Activated CD4-positive, alpha-beta T cell treated with anti-CD3 and anti-CD28 coated beads for 36 hours (primary cell): ENCODE measurements at regions of chr14 and their contacts with region 1.

Region 1: GRCh38 chr14:92748259-92749016 is at the start of gene LGMN:
- DNase-seq: peak; percentile 90
- ATAC-seq: peak; percentile 97
- H3K4me3 Mint-ChIP-seq: peak within 1 kb of the TSS; percentile 75
- H3K27ac Mint-ChIP-seq: peak within 1 kb of the TSS; percentile 45
- H3K4me1 Mint-ChIP-seq: peaks cover 29% of the 10 kb centered on the region
- H3K27me3 Mint-ChIP-seq: peaks cover 23% of the 10 kb centered on the region
- total RNA-seq, gene LGMN: 3.2 to 5.6 TPM

Region 2: GRCh38 chr14:92728759-92729370 is 19.6 kb before region 1 on chr14:
- CTCF ChIA-PET with region 1: interaction called, 3 read pairs
- POLR2A ChIA-PET with region 1: no interaction called
- intact Hi-C with region 1: loop called (anchors 1 to 2 kb)
- DNase-seq: peak; percentile 84
- ATAC-seq: peak; percentile 97
- H3K4me3 Mint-ChIP-seq: no peak overlapping the region
- H3K27ac Mint-ChIP-seq: no peak overlapping the region
- H3K4me1 Mint-ChIP-seq: peaks cover 20% of the 10 kb centered on the region
- H3K27me3 Mint-ChIP-seq: peaks cover 5% of the 10 kb centered on the region

Region 3: DNA sequence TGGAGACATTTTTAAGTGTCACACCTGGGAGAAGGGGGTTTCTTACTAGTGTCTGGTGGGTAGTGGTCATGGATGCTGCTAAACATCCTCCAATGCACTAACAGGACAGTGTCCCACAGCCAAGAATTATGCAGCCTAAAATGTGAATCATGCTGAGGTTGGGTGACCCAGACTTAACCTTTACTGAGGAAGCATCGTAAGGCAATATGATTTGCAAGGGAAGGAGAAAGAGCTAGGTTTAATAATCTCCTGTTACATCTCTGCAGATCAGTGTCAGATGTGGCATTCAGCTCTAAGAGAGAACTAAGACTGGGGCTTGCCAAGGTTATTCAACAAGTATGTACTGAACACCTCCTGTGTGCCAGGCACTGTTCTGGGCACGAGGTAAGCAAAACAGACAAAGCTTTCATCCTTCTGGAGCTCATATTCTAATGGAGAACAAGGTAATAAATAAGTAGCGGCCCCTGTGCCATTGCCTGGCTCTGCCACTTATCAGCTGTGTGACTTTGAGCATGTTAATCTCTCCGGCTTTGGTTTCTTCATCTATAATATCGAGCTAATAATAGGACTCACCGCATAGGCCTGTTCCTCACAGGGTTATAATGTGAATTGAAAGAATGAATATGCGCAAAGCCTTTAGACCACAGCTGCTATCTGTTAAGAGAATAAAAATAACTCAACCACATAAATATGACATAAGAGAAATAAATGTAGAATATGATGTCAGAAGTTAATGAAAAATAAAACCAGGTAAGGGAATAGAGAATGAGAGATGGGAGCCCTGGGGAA is 32.2 kb after region 1 on chr14:
- CTCF ChIA-PET with region 1: no interaction called
- POLR2A ChIA-PET with region 1: no interaction called
- intact Hi-C with region 1: no loop called
- DNase-seq: no peak
- ATAC-seq: peak; percentile 58
- H3K4me3 Mint-ChIP-seq: no peak overlapping the region
- H3K27ac Mint-ChIP-seq: no peak overlapping the region
- H3K4me1 Mint-ChIP-seq: peaks cover 8% of the 10 kb centered on the region
- H3K27me3 Mint-ChIP-seq: no peaks in the 10 kb centered on the region